ENCODE measurements at regions of chr11 and their contacts with region 1.

Region 1: DNA sequence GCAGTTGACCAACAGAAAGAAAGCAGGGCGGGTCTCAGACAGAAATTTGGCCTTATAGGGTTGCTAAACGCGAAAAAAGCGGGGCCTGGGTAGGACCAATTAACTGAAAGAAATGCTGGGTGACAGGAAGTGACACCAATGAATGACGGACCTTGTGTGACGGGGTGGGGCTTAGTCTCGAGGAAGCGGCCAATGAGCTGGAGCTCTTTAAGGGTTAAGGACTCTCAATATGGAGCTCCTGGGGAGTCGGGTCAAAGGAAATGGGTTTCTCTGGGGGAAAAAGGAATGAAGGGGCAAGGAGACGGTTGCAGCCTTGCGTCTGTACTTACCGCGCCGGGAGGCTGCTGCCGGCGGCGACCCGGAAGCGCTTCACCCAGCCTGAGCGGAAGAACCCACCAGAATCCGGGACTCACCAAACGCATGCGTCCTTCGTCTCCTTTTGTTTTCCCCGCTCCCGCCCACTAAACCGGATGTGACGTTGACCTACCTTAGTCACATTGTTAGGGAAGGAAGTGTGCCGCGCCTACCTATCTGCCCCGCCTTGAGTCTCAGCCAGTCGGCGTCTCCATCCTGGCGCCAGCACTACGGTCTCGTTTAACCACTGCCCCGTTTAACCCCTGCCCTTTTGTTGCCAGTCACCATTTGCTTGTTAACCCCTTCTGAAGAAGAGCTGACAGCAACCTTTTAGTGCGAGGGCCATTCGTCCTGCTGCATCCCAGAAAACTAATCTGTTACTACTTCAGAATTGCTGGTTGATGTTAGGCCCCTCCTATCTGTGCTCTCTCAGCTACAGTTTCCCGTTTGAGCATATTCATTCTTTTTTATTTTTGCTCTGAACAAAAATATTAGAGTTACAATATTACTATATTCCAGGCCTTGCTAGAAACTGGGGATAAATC is at the start of gene ANAPC15:
- DNase-seq: peak; percentile 99
- ATAC-seq: peak; percentile 96
- H3K4me3 ChIP-seq: peak within 1 kb of the TSS; percentile 52 to 94
- H3K27ac ChIP-seq: peak within 1 kb of the TSS; percentile 99
- H3K4me1 ChIP-seq: peaks cover 16% of the 10 kb centered on the region
- H3K27me3 ChIP-seq: no peaks in the 10 kb centered on the region
- CTCF ChIP-seq: no peak
- total RNA-seq, gene ANAPC15: 78.2 TPM

Region 2: DNA sequence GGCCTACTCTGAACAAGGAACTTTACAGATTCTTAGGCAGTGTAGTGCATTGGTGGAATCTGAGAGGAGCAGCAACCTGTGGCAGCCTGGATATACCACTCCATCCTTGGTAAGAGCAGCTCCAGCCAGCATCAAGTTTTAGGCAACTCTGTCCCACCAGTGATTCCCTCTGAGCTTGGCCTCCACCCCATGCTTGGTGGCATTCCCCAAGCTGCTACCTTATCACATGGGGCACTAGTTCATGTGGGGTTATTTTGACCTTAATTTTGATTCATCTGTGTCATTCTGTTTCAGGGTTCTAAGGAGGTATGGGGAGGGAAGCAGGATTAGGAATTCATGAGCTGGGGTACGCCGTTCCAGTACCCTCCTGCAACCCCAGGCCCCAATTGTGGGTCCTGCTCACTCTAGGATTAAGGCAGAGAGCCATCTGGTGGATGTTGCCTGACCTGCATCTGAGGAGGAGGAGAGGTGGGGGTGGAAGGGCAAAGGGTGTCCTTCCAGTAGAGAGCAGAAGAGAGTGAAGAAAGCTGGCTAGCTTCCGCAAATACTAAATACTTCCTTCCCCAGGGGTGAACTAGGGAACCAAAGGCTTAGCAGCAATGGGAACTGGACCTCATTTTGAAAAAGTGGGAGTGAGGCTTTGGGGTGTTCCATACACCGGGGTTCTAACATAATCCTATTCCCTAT is 21.4 kb before region 1 on chr11:
- CTCF ChIA-PET with region 1: interaction called, 3 read pairs
- POLR2A ChIA-PET with region 1: interaction called, 11 read pairs
- in situ Hi-C with region 1: no loop called
- intact Hi-C with region 1: no loop called
- DNase-seq: no peak
- ATAC-seq: peak; percentile 92
- H3K4me3 ChIP-seq: no peak overlapping the region
- H3K27ac ChIP-seq: no peak overlapping the region
- H3K4me1 ChIP-seq: no peaks in the 10 kb centered on the region
- H3K27me3 ChIP-seq: no peaks in the 10 kb centered on the region
- CTCF ChIP-seq: peak; percentile 92

Measured in Panc1 (cell line).